Activated T-helper 2 cell treated with anti-CD3 and anti-CD28 coated beads, Interferon-gamma antibody, Interleukin-2, Interleukin-4, amounts not matched to agents 10 μg/mL and 5 μg/mL and 100 μg/mL, durations not matched to agents 14 hours and 24 hours and 36 hours (primary cell): ENCODE measurements at regions of chr2 and their contacts with region 1.

Region 1: GRCh38 chr2:40395171-40396073 is 56.5 kb downstream of the SLC8A1 start:
- DNase-seq: no peak
- H3K4me3 Mint-ChIP-seq: no peak overlapping the region
- H3K27ac Mint-ChIP-seq: no peak overlapping the region
- H3K4me1 Mint-ChIP-seq: peaks cover 10% of the 10 kb centered on the region
- H3K27me3 Mint-ChIP-seq: peaks cover 2% of the 10 kb centered on the region

Region 2: DNA sequence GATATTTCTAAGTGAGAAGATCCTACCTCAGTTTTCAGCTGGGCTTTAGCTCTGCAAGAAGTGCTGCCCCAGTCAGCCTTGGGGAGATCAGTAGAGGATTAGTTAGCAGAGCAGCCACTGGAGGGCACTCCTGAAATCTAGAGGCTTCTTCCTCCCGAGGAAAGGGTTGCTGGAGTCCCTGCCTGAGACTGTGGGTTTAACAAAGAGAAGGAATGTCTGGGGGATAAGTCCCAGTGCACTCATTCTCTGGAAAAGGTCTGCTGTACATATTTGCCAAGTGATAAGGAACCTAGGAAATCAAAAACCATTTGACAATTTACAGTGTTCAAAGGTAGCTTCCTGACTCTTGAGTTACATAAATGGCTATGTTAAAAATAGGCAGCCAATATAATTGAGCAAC is 150.7 kb before region 1 on chr2:
- intact Hi-C with region 1: no loop called
- DNase-seq: no peak
- H3K4me3 Mint-ChIP-seq: no peak overlapping the region
- H3K27ac Mint-ChIP-seq: no peak overlapping the region
- H3K4me1 Mint-ChIP-seq: peaks cover 8% of the 10 kb centered on the region
- H3K27me3 Mint-ChIP-seq: no peaks in the 10 kb centered on the region

Region 3: DNA sequence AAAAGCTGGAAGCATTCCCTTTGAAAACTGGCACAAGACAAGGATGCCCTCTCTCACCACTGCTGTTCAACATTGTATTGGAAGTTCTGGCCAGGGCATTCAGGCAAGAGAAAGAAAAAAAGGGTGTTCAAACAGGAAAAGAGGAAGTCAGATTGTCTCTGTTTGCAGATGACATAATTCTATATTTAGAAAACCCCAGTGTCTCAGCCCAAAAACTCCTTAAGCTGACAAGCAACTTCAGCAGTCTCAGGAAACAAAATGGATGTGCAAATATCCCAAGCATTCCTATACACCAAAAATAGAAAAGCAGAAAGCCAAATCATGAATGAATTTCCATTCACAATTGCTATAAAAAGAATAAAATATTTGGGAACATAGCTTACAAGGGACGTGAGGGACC is 45.4 kb after region 1 on chr2:
- intact Hi-C with region 1: loop called (anchors 5 kb)
- DNase-seq: no peak
- H3K4me3 Mint-ChIP-seq: no peak overlapping the region
- H3K27ac Mint-ChIP-seq: no peak overlapping the region
- H3K4me1 Mint-ChIP-seq: peaks cover 4% of the 10 kb centered on the region
- H3K27me3 Mint-ChIP-seq: peaks cover 4% of the 10 kb centered on the region